Transverse colon (tissue), 4 donors: ENCODE measurements at regions of chr3 and their contacts with region 1.

Region 1: GRCh38 chr3:120795017-120795648 is 52.6 kb downstream of the GTF2E1 start:
- DNase-seq: peak; percentile 80
- H3K4me3 ChIP-seq: no peak overlapping the region
- H3K27ac ChIP-seq: no peak overlapping the region
- H3K4me1 ChIP-seq: peaks cover 0 to 38% (median 21%) of the 10 kb centered on the region in 4 donors
- H3K27me3 ChIP-seq: no peaks in the 10 kb centered on the region
- CTCF ChIP-seq: peak; percentile 61 to 70 (median 68)
- EP300 ChIP-seq: no peak
- POLR2A ChIP-seq: no peak

Region 2: GRCh38 chr3:120227710-120228347 is 567.3 kb before region 1 on chr3:
- in situ Hi-C with region 1: loop called in 2 of 4 experiments (anchors 25 kb)
- intact Hi-C with region 1: no loop called
- DNase-seq: no peak
- H3K4me3 ChIP-seq: no peak overlapping the region
- H3K27ac ChIP-seq: no peak overlapping the region
- H3K4me1 ChIP-seq: no peaks in the 10 kb centered on the region
- H3K27me3 ChIP-seq: no peaks in the 10 kb centered on the region
- CTCF ChIP-seq: no peak
- EP300 ChIP-seq: no peak
- POLR2A ChIP-seq: no peak

Region 3: GRCh38 chr3:120258009-120258408 is 537.1 kb before region 1 on chr3:
- in situ Hi-C with region 1: no loop called
- intact Hi-C with region 1: no loop called
- DNase-seq: no peak
- H3K4me3 ChIP-seq: no peak overlapping the region
- H3K27ac ChIP-seq: no peak overlapping the region
- H3K4me1 ChIP-seq: no peaks in the 10 kb centered on the region
- H3K27me3 ChIP-seq: no peaks in the 10 kb centered on the region
- CTCF ChIP-seq: no peak
- EP300 ChIP-seq: no peak
- POLR2A ChIP-seq: no peak

Region 4: DNA sequence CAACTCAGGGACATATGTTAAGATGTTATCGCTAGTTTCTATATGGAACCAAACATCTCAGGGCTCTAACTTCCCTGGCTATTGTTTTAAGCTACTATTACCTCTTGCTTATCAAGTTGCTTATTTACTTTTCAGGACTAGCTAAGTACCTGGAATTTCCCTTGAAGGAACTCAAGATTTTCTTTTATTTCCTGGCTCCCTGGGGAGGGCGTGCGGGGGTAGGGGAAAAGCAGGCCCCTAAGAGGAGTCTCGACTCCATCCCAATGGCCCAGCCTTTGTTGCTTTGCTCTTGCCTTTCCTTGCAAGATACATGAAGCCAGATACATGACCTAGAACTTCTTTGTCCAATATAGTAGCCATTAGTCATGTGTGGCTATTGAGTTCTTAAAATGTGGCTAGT is 35.9 kb after region 1 on chr3:
- in situ Hi-C with region 1: no loop called
- intact Hi-C with region 1: loop called (anchors 1 kb)
- DNase-seq: no peak
- H3K4me3 ChIP-seq: no peak overlapping the region
- H3K27ac ChIP-seq: no peak overlapping the region
- H3K4me1 ChIP-seq: no peaks in the 10 kb centered on the region
- H3K27me3 ChIP-seq: no peaks in the 10 kb centered on the region
- CTCF ChIP-seq: no peak
- EP300 ChIP-seq: no peak
- POLR2A ChIP-seq: no peak